GM10248 (cell line): ENCODE measurements at regions of chr6 and their contacts with region 1.

Region 1: GRCh38 chr6:41424370-41425058 is 89.1 kb downstream of the NCR2 start:
- DNase-seq: peak; percentile 77
- CTCF ChIP-seq: peak; percentile 89

Region 2: GRCh38 chr6:41271901-41272395 is 152.6 kb before region 1 on chr6:
- CTCF ChIA-PET with region 1: no interaction called
- POLR2A ChIA-PET with region 1: no interaction called
- DNase-seq: no peak
- CTCF ChIP-seq: no peak

Region 3: GRCh38 chr6:41406728-41407489 is 17.6 kb before region 1 on chr6:
- CTCF ChIA-PET with region 1: interaction called, 43 read pairs
- POLR2A ChIA-PET with region 1: no interaction called
- DNase-seq: no peak
- CTCF ChIP-seq: no peak

Region 4: DNA sequence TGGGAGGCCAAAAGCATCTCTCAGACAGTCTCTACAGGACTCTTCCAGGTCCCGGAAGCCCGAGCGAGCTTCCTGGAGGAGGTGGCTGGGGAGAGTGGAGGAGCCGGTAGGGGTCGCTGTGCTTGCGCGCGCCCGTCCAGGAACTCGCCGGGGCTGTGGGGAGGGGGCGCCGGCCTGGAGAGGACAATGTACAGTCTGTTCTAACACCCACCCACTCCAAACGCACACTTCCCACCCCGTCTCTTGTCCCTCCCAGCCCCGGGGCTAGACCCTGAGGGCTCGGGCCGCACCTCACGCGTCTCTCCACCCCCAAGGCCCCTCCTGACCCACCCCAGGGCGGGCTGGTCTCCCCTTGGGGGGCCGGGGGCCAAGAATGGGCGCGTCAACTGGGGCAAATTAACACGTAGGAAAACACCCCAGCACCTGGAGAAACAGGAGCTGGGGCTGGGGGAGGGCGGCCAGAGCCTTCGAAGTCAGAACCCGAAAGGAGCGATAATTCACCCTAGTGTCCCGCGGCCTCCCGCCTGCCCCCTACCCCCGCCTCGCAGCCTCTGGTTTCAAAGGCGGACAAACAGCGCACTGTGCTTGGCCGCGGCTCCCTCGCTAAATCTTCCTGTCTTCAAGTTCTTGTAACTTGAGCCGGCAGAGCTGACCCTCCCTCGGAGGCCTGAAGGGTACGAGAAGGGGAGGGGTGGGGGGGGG is 18.4 kb after region 1 on chr6:
- CTCF ChIA-PET with region 1: interaction called, 18 read pairs
- POLR2A ChIA-PET with region 1: no interaction called
- DNase-seq: no peak
- CTCF ChIP-seq: peak; percentile 7

Region 5: DNA sequence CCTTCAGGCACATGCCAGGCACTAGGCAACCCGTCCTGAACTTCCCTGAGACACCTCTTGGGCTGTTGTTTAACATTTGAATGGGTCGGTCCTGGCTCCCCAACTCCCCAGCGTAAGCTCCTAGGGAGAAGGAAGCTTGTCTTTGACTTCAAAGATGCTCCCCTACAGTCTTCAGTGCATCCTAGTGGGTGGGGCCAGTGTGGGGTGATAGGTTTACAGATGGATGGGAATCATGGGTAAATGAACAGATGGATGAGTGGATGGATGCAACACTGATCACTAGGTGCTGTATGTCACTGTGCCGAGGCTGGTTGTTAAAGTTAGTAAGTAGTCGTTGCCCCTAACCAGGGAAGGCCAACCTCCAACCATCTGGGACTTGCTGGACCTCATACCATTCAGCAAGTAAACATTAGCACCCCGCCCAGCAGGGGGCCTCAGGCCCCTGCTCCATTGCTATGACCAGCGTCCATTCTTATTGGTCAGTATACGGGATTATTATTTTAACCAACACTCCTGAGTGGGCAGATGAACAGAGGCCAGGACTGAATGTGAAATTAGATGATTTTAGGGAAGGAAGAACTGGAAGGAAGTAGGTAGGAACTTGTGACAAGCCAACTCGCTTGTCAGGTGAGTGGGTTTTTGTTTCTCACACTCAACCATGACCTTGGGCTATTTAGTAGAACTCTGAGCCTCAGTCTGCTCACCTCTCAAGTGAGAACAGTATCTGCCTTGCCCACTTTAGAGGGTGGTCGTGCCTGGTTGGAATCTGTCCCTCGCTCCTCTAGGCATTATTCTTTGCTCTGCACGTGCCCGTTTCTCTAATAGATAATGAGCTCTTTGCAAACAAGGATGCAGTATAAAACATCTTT is 38.8 kb after region 1 on chr6:
- CTCF ChIA-PET with region 1: interaction called, 15 read pairs
- POLR2A ChIA-PET with region 1: no interaction called
- DNase-seq: peak; percentile 81
- CTCF ChIP-seq: peak; percentile 72

Region 6: GRCh38 chr6:41705996-41706835 is 281.7 kb after region 1 on chr6:
- CTCF ChIA-PET with region 1: interaction called, 10 read pairs
- POLR2A ChIA-PET with region 1: no interaction called
- DNase-seq: peak; percentile 92
- CTCF ChIP-seq: peak; percentile 90